Psoas muscle (tissue), 8 donors: ENCODE measurements at regions of chr7 and their contacts with region 1.

Region 1: GRCh38 chr7:157208571-157209413 is 70.1 kb downstream of the UBE3C start:
- DNase-seq: no peak
- ATAC-seq: no peak
- H3K4me3 ChIP-seq: no peak overlapping the region
- H3K27ac ChIP-seq: no peak overlapping the region
- H3K4me1 ChIP-seq: no peaks in the 10 kb centered on the region
- H3K27me3 ChIP-seq: no peaks in the 10 kb centered on the region
- CTCF ChIP-seq: no peak

Region 2: GRCh38 chr7:157125376-157126223 is 83.2 kb before region 1 on chr7:
- intact Hi-C with region 1: no loop called
- DNase-seq: no peak
- ATAC-seq: no peak
- H3K4me3 ChIP-seq: no peak overlapping the region
- H3K27ac ChIP-seq: no peak overlapping the region
- H3K4me1 ChIP-seq: no peaks in the 10 kb centered on the region
- H3K27me3 ChIP-seq: peaks cover 0 to 15% (median 0%) of the 10 kb centered on the region in 3 donors
- CTCF ChIP-seq: no peak

Region 3: GRCh38 chr7:157222687-157223086 is 13.9 kb after region 1 on chr7:
- intact Hi-C with region 1: loop called in 1 of 2 experiments (anchors 2 kb)
- DNase-seq: no peak
- ATAC-seq: no peak
- H3K4me3 ChIP-seq: no peak overlapping the region
- H3K27ac ChIP-seq: no peak overlapping the region
- H3K4me1 ChIP-seq: no peaks in the 10 kb centered on the region
- H3K27me3 ChIP-seq: no peaks in the 10 kb centered on the region
- CTCF ChIP-seq: no peak

Region 4: GRCh38 chr7:157961731-157962457 is 753.1 kb after region 1 on chr7:
- intact Hi-C with region 1: no loop called
- DNase-seq: no peak
- ATAC-seq: no peak
- H3K4me3 ChIP-seq: no peak overlapping the region
- H3K27ac ChIP-seq: no peak overlapping the region
- H3K4me1 ChIP-seq: no peaks in the 10 kb centered on the region
- H3K27me3 ChIP-seq: no peaks in the 10 kb centered on the region
- CTCF ChIP-seq: no peak

Region 5: GRCh38 chr7:158487631-158488151 is 1278.9 kb after region 1 on chr7:
- intact Hi-C with region 1: no loop called
- DNase-seq: no peak
- ATAC-seq: no peak
- H3K4me3 ChIP-seq: no peak overlapping the region
- H3K27ac ChIP-seq: no peak overlapping the region
- H3K4me1 ChIP-seq: no peaks in the 10 kb centered on the region
- H3K27me3 ChIP-seq: peaks cover 0 to 8% (median 0%) of the 10 kb centered on the region in 3 donors
- CTCF ChIP-seq: no peak